ENCODE measurements at regions of chr4 and their contacts with region 1.

Region 1: DNA sequence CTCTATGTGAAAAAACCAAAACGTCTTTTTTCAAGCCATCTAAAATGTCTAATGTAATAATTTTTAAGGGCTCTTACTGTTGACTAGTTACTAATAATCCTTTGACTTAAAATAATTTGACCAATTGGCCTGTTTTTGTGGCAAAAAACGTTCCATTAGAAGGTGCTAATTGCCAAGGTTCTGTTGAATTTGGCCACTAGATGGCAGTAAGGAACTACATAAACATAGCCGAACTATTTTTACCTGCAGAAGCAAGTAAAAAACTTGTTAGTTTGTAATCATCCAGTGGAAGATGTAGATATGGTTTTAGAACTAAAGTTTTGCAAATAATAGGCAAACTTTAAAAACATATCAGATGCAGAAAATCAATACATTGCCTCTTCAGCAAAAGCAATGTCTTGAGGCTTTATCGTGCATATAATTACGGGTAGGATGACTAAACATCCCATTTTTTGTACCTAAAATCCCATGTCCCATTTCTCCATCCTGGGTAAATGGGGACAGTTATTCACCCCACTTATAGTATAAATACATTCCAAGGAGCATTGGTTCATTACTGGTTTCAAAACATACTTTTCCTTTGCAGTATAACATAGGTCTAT is 57.6 kb downstream of the PROM1 start:
- H3K4me3 Mint-ChIP-seq: no peak overlapping the region
- H3K27ac Mint-ChIP-seq: no peak overlapping the region
- H3K4me1 Mint-ChIP-seq: peaks cover 6% of the 10 kb centered on the region
- H3K27me3 Mint-ChIP-seq: no peaks in the 10 kb centered on the region

Region 2: GRCh38 chr4:16157609-16158503 is 131.6 kb after region 1 on chr4:
- intact Hi-C with region 1: no loop called
- H3K4me3 Mint-ChIP-seq: no peak overlapping the region
- H3K27ac Mint-ChIP-seq: no peak overlapping the region
- H3K4me1 Mint-ChIP-seq: peaks cover 6% of the 10 kb centered on the region
- H3K27me3 Mint-ChIP-seq: no peaks in the 10 kb centered on the region

Region 3: GRCh38 chr4:16196478-16197393 is 170.5 kb after region 1 on chr4:
- intact Hi-C with region 1: loop called (anchors 2 kb)
- H3K4me3 Mint-ChIP-seq: no peak overlapping the region
- H3K27ac Mint-ChIP-seq: peak overlapping the region; percentile 76
- H3K4me1 Mint-ChIP-seq: peaks cover 34% of the 10 kb centered on the region
- H3K27me3 Mint-ChIP-seq: no peaks in the 10 kb centered on the region

Region 4: DNA sequence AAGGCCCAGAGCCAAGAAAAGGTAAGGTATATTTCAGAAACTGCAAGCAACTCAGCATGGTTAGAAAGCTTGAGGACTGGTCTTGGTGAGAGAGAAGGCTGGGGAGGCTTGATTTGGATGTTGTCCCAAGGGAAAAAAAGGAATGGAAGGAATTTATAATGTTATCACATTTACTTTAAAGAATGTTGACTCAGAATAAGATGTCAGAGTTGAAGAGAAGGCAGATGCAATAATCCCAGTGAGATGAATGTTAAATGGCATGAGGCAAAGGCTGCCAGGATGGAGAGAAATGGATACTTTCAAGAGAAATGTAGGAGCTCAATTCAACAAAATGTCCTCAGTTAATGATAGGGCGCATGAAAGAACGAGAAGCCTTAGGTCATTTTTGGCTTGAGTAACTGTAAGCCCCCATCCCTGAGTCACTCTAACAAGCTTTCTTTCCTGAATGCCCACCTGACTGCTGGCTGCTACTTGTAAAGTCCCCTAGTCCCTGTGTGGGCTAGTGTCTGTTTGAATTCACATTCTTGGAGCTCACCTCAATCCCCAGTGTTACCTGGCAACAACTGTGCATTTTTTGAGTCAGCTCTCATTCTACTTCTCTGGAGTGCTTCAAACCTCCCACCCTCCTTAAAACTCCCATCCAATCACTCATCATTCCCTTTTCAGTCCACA is 303.0 kb after region 1 on chr4:
- intact Hi-C with region 1: no loop called
- H3K4me3 Mint-ChIP-seq: no peak overlapping the region
- H3K27ac Mint-ChIP-seq: no peak overlapping the region
- H3K4me1 Mint-ChIP-seq: no peaks in the 10 kb centered on the region
- H3K27me3 Mint-ChIP-seq: peaks cover 5% of the 10 kb centered on the region

Region 5: DNA sequence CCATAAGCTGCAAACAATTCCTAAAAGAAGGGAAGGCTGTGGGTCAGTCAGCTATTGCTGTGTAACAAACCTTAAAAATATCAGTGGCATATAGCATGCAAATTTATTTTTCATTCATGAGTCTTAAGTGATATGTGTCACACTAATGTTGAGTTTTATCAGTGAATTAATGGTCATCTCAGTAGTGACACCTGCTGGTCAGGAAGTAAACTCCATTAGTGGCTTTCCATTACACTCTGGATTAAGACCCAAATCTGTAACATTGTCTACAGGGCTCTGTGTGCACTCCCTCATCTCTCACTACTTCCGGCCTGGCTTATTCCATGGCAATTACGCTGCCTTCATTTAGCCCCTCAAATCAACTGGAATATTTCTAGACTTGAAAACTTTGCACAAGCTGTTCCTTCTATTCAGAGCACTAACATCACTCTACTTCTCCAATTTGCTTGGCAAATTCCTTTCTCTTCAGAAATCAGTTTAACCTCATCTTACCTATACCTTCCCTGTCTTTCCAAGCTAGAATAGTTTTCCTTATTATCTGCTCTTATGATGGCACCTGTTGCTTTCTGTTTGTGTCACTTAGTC is 417.3 kb after region 1 on chr4:
- intact Hi-C with region 1: loop called (anchors 1 kb)
- H3K4me3 Mint-ChIP-seq: no peak overlapping the region
- H3K27ac Mint-ChIP-seq: no peak overlapping the region
- H3K4me1 Mint-ChIP-seq: peaks cover 8% of the 10 kb centered on the region
- H3K27me3 Mint-ChIP-seq: peaks cover 3% of the 10 kb centered on the region